IMR-90 (cell line): ENCODE measurements at regions of chr12 and their contacts with region 1.

Region 1: GRCh38 chr12:48890657-48891418 is 25.2 kb upstream of the RND1 start:
- DNase-seq: peak; percentile 62
- ATAC-seq: peak; percentile 100
- H3K4me3 ChIP-seq: peak overlapping the region; percentile 20; the same call in 1 of the 2 replicates
- H3K27ac ChIP-seq: no peak overlapping the region
- H3K4me1 ChIP-seq: no peaks in the 10 kb centered on the region
- H3K27me3 ChIP-seq: peaks cover 7% of the 10 kb centered on the region
- CTCF ChIP-seq: peak; percentile 94
- POLR2A ChIP-seq: no peak
- RAD21 ChIP-seq: peak; percentile 84

Region 2: GRCh38 chr12:48758221-48758620 is 132.6 kb before region 1 on chr12:
- CTCF ChIA-PET with region 1: interaction called, 3 read pairs
- POLR2A ChIA-PET with region 1: no interaction called
- dilution Hi-C with region 1: no loop called
- in situ Hi-C with region 1: no loop called
- intact Hi-C with region 1: loop called (anchors 2 kb)
- DNase-seq: no peak
- ATAC-seq: no peak
- H3K4me3 ChIP-seq: no peak overlapping the region
- H3K27ac ChIP-seq: no peak overlapping the region
- H3K4me1 ChIP-seq: no peaks in the 10 kb centered on the region
- H3K27me3 ChIP-seq: no peaks in the 10 kb centered on the region
- CTCF ChIP-seq: no peak
- POLR2A ChIP-seq: no peak
- RAD21 ChIP-seq: no peak

Region 3: GRCh38 chr12:48924617-48925303 is 33.9 kb after region 1 on chr12:
- CTCF ChIA-PET with region 1: no interaction called
- POLR2A ChIA-PET with region 1: no interaction called
- dilution Hi-C with region 1: no loop called
- in situ Hi-C with region 1: no loop called
- intact Hi-C with region 1: loop called (anchors 5 kb)
- DNase-seq: peak; percentile 46
- ATAC-seq: peak; percentile 42
- H3K4me3 ChIP-seq: peak overlapping the region; percentile 90
- H3K27ac ChIP-seq: peak overlapping the region; percentile 56
- H3K4me1 ChIP-seq: peaks cover 26% of the 10 kb centered on the region
- H3K27me3 ChIP-seq: no peaks in the 10 kb centered on the region
- CTCF ChIP-seq: peak; percentile 53
- POLR2A ChIP-seq: no peak
- RAD21 ChIP-seq: peak; percentile 59

Region 4: GRCh38 chr12:48936379-48936979 is 45.6 kb after region 1 on chr12:
- CTCF ChIA-PET with region 1: interaction called, 3 read pairs
- POLR2A ChIA-PET with region 1: no interaction called
- dilution Hi-C with region 1: no loop called
- in situ Hi-C with region 1: no loop called
- intact Hi-C with region 1: loop called (anchors 2 kb)
- DNase-seq: peak; percentile 79
- ATAC-seq: peak; percentile 95
- H3K4me3 ChIP-seq: no peak overlapping the region
- H3K27ac ChIP-seq: no peak overlapping the region
- H3K4me1 ChIP-seq: no peaks in the 10 kb centered on the region
- H3K27me3 ChIP-seq: no peaks in the 10 kb centered on the region
- CTCF ChIP-seq: peak; percentile 90
- POLR2A ChIP-seq: no peak
- RAD21 ChIP-seq: peak; percentile 84